ENCODE measurements at regions of chr15 and their contacts with region 1.

Region 1: GRCh38 chr15:56040081-56041035 is 46.9 kb upstream of the NEDD4 start:
- DNase-seq: peak; percentile 61 to 76
- ATAC-seq: peak; percentile 79
- H3K4me3 ChIP-seq: no peak overlapping the region
- H3K27ac ChIP-seq: peak overlapping the region in 1 of 2 donors; percentile 96
- H3K4me1 ChIP-seq: no peaks in the 10 kb centered on the region
- H3K27me3 ChIP-seq: no peaks in the 10 kb centered on the region

Region 2: DNA sequence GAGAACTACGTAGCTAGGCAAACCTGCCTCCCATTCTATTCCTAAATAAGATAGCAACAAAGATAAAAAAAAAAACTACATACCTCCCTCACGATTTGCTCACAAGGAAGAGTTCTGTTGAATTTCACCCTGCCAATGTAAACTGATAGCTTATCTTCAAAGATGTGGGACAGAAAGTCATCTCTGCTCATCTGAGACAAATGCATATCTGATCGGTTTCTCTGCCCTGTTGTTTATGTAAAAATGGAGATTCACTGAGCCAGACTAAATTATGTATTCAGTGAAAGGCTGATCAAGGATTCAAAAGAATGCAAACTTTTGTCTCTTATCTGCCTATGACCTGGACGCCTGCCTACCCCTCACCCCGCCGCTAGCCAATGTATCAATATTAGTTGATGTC is 463.4 kb before region 1 on chr15:
- intact Hi-C with region 1: no loop called
- DNase-seq: no peak
- ATAC-seq: no peak
- H3K4me3 ChIP-seq: no peak overlapping the region
- H3K27ac ChIP-seq: no peak overlapping the region
- H3K4me1 ChIP-seq: no peaks in the 10 kb centered on the region
- H3K27me3 ChIP-seq: no peaks in the 10 kb centered on the region

Region 3: GRCh38 chr15:55981582-55982249 is 58.6 kb before region 1 on chr15:
- intact Hi-C with region 1: no loop called
- DNase-seq: no peak
- ATAC-seq: no peak
- H3K4me3 ChIP-seq: no peak overlapping the region
- H3K27ac ChIP-seq: no peak overlapping the region
- H3K4me1 ChIP-seq: no peaks in the 10 kb centered on the region
- H3K27me3 ChIP-seq: no peaks in the 10 kb centered on the region

Region 4: GRCh38 chr15:55993111-55993803 is 47.1 kb before region 1 on chr15 and contains the start of gene NEDD4:
- intact Hi-C with region 1: loop called (anchors 5 kb)
- DNase-seq: peak; percentile 92 to 95
- ATAC-seq: peak; percentile 97
- H3K4me3 ChIP-seq: peak within 1 kb of the TSS; percentile 74 to 82
- H3K27ac ChIP-seq: peak within 1 kb of the TSS; percentile 77 to 88
- H3K4me1 ChIP-seq: peaks cover 0 to 2% of the 10 kb centered on the region in 2 donors
- H3K27me3 ChIP-seq: no peaks in the 10 kb centered on the region
- total RNA-seq, gene NEDD4: 42.6 to 43.4 TPM

Region 5: GRCh38 chr15:55999636-56000035 is 40.7 kb before region 1 on chr15:
- intact Hi-C with region 1: loop called (anchors 5 kb)
- DNase-seq: no peak
- ATAC-seq: no peak
- H3K4me3 ChIP-seq: no peak overlapping the region
- H3K27ac ChIP-seq: no peak overlapping the region
- H3K4me1 ChIP-seq: no peaks in the 10 kb centered on the region
- H3K27me3 ChIP-seq: no peaks in the 10 kb centered on the region

Region 6: GRCh38 chr15:56320861-56321260 is 280.5 kb after region 1 on chr15:
- intact Hi-C with region 1: no loop called
- DNase-seq: no peak
- ATAC-seq: no peak
- H3K4me3 ChIP-seq: no peak overlapping the region
- H3K27ac ChIP-seq: no peak overlapping the region
- H3K4me1 ChIP-seq: no peaks in the 10 kb centered on the region
- H3K27me3 ChIP-seq: no peaks in the 10 kb centered on the region

Measured in aorta (tissue), 5 donors.